ENCODE measurements at regions of chr14 and their contacts with region 1.

Region 1: GRCh38 chr14:82987502-82988124 is 1454.0 kb upstream of the SEL1L start:
- DNase-seq: no peak
- H3K4me3 ChIP-seq: no peak overlapping the region
- H3K27ac ChIP-seq: no peak overlapping the region
- H3K27me3 ChIP-seq: no peaks in the 10 kb centered on the region
- CTCF ChIP-seq: no peak

Region 2: DNA sequence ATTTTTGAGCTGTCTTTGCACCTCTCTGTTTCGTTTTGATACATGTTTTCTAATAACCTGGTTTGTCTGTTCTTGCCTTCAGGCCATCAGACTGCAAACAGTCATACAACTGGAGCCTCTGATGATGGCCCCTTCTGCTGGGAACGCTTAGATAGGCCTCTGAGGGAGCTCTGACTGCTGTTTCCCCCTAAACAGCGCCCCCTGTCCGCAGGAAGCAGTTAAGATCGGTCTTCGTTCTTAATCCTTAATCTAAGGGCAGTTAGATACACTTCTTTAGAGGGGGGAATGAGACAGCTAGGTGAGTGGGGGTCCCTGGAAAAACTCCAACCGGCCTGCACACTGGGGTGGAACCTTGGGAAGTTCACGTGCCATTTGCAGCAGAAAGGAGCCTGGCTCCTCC is 115.1 kb before region 1 on chr14:
- CTCF ChIA-PET with region 1: no interaction called
- POLR2A ChIA-PET with region 1: no interaction called
- DNase-seq: no peak
- H3K4me3 ChIP-seq: no peak overlapping the region
- H3K27ac ChIP-seq: no peak overlapping the region
- H3K27me3 ChIP-seq: no peaks in the 10 kb centered on the region
- CTCF ChIP-seq: 0 out of 2 replicates have a peak, but pooled peaks have one; percentile 2

Region 3: GRCh38 chr14:82999802-83000201 is 12.2 kb after region 1 on chr14:
- CTCF ChIA-PET with region 1: interaction called, 11 read pairs
- POLR2A ChIA-PET with region 1: no interaction called
- DNase-seq: peak; percentile 10
- H3K4me3 ChIP-seq: no peak overlapping the region
- H3K27ac ChIP-seq: no peak overlapping the region
- H3K27me3 ChIP-seq: no peaks in the 10 kb centered on the region
- CTCF ChIP-seq: peak; percentile 69